Spleen (tissue), 13 donors: ENCODE measurements at regions of chr16 and their contacts with region 1.

Region 1: DNA sequence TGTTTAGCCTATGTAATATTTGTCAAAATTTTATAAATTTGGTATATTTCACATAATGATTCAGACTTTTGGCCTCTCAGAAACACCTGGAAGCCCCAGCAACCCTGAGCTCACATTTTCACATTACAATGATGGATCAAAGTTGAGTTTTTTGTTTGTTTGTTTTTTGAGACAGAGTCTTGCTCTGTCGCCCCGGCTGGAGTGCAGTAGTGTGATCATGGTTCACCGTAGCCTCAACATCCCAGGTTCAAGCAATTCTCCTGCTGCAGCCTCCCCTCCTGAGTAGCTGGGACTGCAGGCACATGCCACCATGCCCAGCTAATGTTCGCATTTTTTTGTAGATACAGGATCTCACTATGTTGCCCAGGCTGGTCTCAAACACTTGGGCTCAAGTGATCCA is 10.6 kb upstream of the VAT1L start:
- DNase-seq: no peak
- H3K4me3 ChIP-seq: no peak overlapping the region
- H3K27ac ChIP-seq: no peak overlapping the region
- H3K4me1 ChIP-seq: no peaks in the 10 kb centered on the region
- H3K27me3 ChIP-seq: peaks cover 0 to 9% (median 0%) of the 10 kb centered on the region in 7 donors
- CTCF ChIP-seq: no peak
- POLR2A ChIP-seq: no peak

Region 2: DNA sequence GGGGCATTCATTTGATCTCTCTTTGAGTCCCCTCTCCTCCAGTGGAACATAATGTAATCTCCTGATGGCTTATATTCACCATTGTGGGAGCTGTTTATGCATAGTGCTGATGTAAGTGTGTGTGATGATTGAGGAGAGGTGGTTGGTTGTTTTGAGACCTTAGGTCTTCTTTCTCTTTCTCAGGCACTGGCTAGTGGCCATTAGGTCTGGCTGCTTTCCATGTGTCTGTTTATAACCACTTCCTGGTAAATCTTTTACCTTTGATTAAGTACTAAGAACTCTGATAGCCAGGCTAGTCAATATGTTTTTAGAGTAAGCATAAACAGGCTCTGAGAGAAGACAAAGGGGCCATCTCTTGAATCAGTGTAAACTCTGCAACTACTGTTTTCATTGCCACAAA is 38.5 kb after region 1 on chr16:
- intact Hi-C with region 1: loop called (anchors 2 kb)
- DNase-seq: no peak
- H3K4me3 ChIP-seq: no peak overlapping the region
- H3K27ac ChIP-seq: no peak overlapping the region
- H3K4me1 ChIP-seq: no peaks in the 10 kb centered on the region
- H3K27me3 ChIP-seq: no peaks in the 10 kb centered on the region
- CTCF ChIP-seq: no peak
- POLR2A ChIP-seq: no peak